CD4-positive, alpha-beta T cell (primary cell): ENCODE measurements at regions of chr14 and their contacts with region 1.

Region 1: DNA sequence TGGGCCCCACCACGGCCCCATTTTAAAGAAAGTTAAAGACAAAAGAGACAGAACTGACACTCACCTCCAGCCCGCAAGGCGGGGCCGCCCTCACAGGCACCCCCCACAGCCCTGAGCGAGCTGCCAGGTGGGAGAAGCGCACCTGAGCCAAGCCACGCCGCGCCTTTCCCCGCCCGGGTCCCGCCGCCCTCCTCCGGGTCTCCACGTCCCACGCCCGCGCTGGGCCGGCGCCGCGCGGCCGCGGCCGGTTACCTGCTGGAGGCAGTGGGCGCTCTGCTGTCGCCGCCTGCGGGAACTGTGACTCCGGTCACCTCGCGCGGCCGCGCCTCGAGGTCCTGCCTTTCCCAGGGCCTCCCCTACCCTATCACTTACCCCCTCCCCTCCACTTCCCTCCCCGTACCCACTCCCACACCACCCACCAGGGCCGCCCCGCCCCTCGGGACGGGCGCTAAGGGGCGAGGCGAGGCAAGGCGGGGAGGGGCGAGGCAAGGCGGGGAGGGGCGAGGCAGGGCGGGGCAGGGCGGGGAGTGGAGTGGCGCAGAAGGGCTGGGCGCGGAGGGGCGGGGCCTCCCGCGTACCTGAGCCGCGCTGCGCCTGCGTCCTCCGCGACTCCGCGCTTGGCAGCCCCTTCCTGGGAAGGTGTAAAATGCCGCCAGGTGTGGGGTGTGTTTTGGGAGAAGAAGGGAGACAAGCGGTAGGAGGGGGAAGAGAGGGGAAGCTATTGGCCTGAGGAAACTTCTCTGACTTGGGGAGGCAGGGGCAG is 31.0 kb downstream of the TC2N start:
- DNase-seq: peak; percentile 78 to 97 (median 90)
- ATAC-seq: peak; percentile 95
- H3K4me3 ChIP-seq: peak overlapping the region; percentile 63
- H3K4me3 Mint-ChIP-seq: peak overlapping the region; percentile 93
- H3K27ac ChIP-seq: peak overlapping the region; percentile 43 to 59
- H3K27ac Mint-ChIP-seq: peak overlapping the region; percentile 90
- H3K4me1 ChIP-seq: peaks cover 33% of the 10 kb centered on the region
- H3K4me1 Mint-ChIP-seq: peaks cover 83% of the 10 kb centered on the region
- H3K27me3 ChIP-seq: no peaks in the 10 kb centered on the region
- H3K27me3 Mint-ChIP-seq: no peaks in the 10 kb centered on the region
- CTCF ChIP-seq: no peak

Region 2: DNA sequence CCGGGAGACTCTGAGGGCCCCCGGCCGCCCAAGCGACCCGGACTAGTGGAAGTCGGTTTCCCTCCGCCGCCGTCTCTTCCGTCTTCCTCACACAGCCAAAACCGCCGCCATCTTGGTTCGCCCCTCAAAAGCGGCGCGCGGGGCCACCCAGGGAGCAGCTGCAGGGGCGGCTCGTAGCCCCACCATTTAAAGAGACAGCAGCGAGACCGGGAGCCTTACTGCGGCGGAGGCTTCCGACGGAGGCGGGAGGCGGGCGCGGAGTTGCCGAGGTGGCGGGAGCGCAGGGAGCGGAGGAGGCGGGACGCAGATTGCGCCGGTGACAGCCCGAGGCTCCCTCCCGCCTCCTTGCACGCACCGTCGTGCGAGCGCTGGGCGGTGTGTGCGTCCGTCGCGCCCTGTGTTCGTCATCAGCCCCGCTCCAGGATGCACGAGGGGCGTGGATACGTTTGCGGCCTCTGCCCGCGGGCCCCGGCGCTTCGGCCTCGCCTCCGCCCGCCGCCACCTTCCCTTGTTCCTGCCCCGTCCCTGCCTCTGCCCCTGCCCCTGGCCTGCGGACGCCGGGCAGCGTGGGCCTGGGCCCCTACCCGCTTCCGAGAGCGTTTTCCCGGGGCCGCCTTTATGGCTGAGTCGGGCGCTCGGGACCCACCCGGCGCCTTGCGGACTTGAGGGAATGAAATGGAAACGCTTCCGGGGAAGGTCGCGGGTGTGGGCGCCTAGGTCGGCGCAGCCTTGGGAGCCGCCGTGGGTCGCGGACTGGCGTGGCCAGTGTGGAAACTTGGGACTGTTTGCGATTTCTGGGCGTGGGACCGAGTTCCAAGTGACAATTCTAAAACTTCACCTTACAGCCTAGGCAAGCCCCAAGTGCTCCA is 325.9 kb before region 1 on chr14 and contains the start of gene PPP4R3A:
- CTCF ChIA-PET with region 1: no interaction called
- POLR2A ChIA-PET with region 1: no interaction called
- intact Hi-C with region 1: loop called in 1 of 2 experiments (anchors 5 kb)
- DNase-seq: peak; percentile 82 to 98 (median 90)
- ATAC-seq: peak; percentile 85
- H3K4me3 ChIP-seq: peak within 1 kb of the TSS; percentile 90
- H3K4me3 Mint-ChIP-seq: peak within 1 kb of the TSS; percentile 100
- H3K27ac ChIP-seq: peak within 1 kb of the TSS; percentile 99
- H3K27ac Mint-ChIP-seq: peak within 1 kb of the TSS; percentile 100
- H3K4me1 ChIP-seq: peaks cover 23% of the 10 kb centered on the region
- H3K4me1 Mint-ChIP-seq: peaks cover 44% of the 10 kb centered on the region
- H3K27me3 ChIP-seq: no peaks in the 10 kb centered on the region
- H3K27me3 Mint-ChIP-seq: no peaks in the 10 kb centered on the region
- CTCF ChIP-seq: no peak
- total RNA-seq, gene PPP4R3A: 189 to 205 TPM

Region 3: DNA sequence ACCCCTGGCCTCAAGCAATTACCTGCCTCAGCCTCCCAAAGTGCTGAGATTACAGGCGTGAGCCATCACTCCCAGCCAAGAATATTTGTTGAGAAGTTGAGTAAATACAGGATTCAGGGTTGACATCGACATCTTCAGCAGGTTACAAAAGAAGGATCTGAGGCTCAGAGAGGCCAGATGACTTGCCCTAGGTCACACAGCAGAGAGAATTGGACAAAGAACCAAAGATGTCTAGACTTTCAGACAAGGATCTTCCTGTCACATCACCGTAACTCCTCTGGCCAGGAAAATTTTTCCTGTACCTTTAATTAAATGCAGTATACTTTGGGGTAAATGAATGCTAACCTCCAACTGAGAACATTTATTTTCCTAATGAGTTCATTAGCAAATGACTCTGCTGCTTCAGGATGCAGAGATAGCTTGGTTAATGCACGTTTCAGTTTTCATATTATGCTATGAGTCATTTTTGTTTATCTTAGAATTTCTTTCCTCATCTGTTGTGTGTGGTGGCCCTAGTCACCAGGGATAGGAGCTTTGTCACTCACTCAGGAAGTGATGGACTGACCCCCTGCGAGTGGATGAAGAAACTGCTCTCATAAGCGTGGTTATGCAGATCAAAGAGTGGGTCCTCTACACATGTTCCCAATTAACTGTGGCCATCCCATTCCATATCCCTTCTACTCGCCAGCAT is 22.1 kb after region 1 on chr14:
- CTCF ChIA-PET with region 1: interaction called, 4 read pairs
- POLR2A ChIA-PET with region 1: interaction called, 12 read pairs
- intact Hi-C with region 1: no loop called
- DNase-seq: peak in 2 of 14 experiments; percentile 32 to 44
- ATAC-seq: peak; percentile 32
- H3K4me3 ChIP-seq: no peak overlapping the region
- H3K4me3 Mint-ChIP-seq: peak overlapping the region; percentile 54
- H3K27ac ChIP-seq: no peak overlapping the region
- H3K27ac Mint-ChIP-seq: peak overlapping the region; percentile 95
- H3K4me1 ChIP-seq: peaks cover 90% of the 10 kb centered on the region
- H3K4me1 Mint-ChIP-seq: peaks cover 96% of the 10 kb centered on the region
- H3K27me3 ChIP-seq: no peaks in the 10 kb centered on the region
- H3K27me3 Mint-ChIP-seq: no peaks in the 10 kb centered on the region
- CTCF ChIP-seq: no peak